CD4-positive, alpha-beta memory T cell (primary cell): ENCODE measurements at regions of chr4 and their contacts with region 1.

Region 1: DNA sequence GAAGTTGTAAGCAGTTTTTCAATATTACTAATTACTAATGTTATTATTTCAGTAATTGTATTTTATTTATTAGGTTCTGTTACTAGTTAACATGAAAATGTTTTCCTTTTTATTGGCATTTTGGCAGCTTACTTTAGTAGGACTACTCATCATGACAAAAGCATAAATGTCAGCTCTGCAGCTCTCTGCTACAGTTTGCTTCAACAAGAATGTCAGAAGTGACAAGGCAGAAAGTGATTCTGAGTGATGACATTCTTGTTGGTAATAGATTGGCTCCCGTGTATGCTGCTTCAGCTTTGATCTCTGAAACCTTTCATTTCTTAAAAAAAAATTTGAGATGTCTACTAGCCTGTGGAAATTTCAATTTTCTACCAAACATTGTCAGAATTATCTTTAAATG is 1193.9 kb downstream of the FSTL5 start:
- DNase-seq: no peak
- H3K4me3 ChIP-seq: no peak overlapping the region
- H3K4me3 Mint-ChIP-seq: no peak overlapping the region
- H3K27ac ChIP-seq: no peak overlapping the region
- H3K27ac Mint-ChIP-seq: no peak overlapping the region
- H3K4me1 ChIP-seq: no peaks in the 10 kb centered on the region
- H3K4me1 Mint-ChIP-seq: no peaks in the 10 kb centered on the region
- H3K27me3 ChIP-seq: no peaks in the 10 kb centered on the region
- H3K27me3 Mint-ChIP-seq: no peaks in the 10 kb centered on the region

Region 2: GRCh38 chr4:160956875-160957274 is 13.1 kb before region 1 on chr4:
- CTCF ChIA-PET with region 1: no interaction called
- POLR2A ChIA-PET with region 1: no interaction called
- intact Hi-C with region 1: loop called (anchors 1 kb)
- DNase-seq: no peak
- H3K4me3 ChIP-seq: no peak overlapping the region
- H3K4me3 Mint-ChIP-seq: no peak overlapping the region
- H3K27ac ChIP-seq: no peak overlapping the region
- H3K27ac Mint-ChIP-seq: no peak overlapping the region
- H3K4me1 ChIP-seq: no peaks in the 10 kb centered on the region
- H3K4me1 Mint-ChIP-seq: no peaks in the 10 kb centered on the region
- H3K27me3 ChIP-seq: no peaks in the 10 kb centered on the region
- H3K27me3 Mint-ChIP-seq: no peaks in the 10 kb centered on the region